ENCODE measurements at regions of chr3 and their contacts with region 1.

Region 1: GRCh38 chr3:170869645-170870593 is at the start of gene RPL22L1:
- DNase-seq: peak; percentile 98
- total RNA-seq, gene RPL22L1: 15.9 TPM

Region 2: DNA sequence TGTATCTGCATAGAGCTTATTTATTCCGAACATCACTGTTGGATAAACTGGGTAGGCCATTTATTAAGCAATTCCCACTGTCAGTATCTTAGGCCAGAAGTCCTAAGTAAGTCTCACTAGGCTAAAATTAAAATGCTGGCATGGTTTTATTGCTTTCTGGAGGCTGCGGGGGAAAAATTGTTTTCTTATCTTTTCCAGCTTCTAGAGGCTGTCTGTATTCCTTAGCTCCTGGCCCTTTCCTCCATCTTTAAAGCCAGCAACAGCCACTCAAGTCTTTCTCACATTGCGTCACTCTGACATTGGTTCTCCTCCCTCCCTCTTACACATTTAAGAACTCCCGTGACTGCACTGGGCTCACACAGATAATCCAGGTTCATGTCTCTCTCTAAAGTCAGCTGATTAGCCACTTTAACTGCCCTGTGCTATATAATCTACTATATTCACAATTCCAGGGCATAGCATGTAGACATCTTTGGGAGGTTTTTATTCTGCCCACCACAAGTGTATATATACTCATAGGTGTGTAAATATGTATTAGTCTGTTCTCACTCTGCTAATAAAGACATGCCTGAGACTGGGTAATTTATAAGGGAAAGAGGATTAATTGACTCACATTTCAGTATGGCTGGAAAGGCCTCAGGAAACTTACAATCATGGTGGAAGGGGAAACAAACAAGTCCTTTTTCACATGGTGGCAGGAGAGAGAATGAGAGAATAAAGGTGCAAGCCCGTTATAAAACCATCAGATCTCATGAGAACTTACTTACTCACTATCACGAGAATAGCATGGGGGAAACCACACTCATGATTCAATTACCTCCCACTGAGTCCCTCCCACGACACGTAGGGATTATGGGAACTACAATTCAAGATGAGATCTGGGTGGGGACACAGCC is 170.5 kb before region 1 on chr3:
- intact Hi-C with region 1: no loop called
- DNase-seq: no peak

Region 3: DNA sequence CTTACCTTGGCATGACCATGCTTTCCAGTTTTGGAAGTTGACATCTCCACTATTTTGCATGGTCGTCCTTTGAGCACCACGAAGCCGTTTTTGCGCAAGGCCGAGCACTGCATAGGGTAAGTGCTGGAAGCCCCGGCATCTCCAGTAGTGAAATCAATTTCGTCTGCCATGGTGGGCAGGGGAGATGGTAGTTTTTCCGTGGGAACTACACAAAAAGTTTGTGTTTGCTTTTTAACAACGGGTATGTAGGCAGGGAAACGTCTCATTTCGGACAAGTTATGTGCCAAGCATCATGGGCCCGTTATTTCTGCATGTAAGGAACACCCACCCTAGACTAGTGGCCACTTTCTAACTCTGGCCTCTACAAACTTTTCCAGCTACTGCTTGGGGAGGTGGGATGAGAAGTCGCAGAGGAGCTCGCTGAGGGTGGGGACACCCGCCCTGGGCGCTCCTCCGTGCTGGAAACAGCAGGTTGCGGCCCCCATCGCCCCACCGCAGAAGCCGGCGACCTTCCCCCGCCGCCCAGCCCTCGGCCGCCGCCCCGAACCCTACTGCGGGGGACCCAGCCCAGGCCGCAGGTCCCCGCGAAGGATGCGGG is 37.8 kb after region 1 on chr3:
- intact Hi-C with region 1: loop called (anchors 1 kb)
- DNase-seq: no peak

Measured in cardiac septum (tissue), 1 donor.